ENCODE measurements at regions of chr2 and their contacts with region 1.

Region 1: DNA sequence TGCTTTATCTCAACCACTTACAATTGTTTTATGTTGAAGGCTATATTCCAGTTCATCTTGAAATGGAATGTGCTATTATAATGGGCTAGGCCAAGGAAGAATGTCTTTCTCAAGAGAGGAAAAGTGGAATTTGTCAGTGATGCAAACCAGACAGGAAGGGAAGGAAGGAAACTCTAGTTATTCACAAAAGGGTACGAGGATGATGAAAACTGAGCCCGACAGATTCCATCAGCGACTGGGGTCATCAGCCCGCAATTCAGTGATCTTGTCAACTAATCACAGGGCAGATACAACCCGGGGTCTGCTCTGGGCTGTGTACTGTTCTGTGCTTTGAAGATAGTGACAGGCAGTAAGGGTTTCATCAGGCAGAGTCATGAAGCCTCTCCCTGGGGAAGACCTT is 23.4 kb upstream of the LYPD6 start:
- DNase-seq: no peak
- H3K4me3 ChIP-seq: no peak overlapping the region
- H3K27ac ChIP-seq: no peak overlapping the region
- H3K4me1 ChIP-seq: no peaks in the 10 kb centered on the region
- H3K27me3 ChIP-seq: no peaks in the 10 kb centered on the region
- CTCF ChIP-seq: no peak
- EP300 ChIP-seq: no peak
- POLR2A ChIP-seq: no peak

Region 2: DNA sequence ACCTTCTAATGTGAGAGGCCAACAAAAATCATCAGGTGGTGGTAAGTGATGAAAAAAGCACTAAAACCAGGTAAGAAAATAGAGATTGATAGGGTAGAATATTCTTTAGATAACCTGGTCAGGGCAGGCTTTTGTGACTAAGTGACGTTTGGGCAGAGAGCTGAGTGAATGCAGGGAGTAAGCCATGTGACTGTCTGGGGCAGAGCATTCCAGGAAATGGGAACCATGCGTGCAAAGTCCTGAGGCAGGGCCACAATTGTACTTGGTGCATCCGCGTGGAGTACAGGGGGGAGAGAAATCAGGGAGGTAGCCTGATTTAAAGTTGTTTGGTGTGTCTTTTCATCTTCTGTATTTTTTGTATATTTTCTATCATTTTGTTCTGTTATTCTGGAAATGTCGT is 166.0 kb before region 1 on chr2:
- in situ Hi-C with region 1: no loop called
- intact Hi-C with region 1: no loop called
- DNase-seq: peak; percentile 16
- H3K4me3 ChIP-seq: no peak overlapping the region
- H3K27ac ChIP-seq: no peak overlapping the region
- H3K4me1 ChIP-seq: no peaks in the 10 kb centered on the region
- H3K27me3 ChIP-seq: no peaks in the 10 kb centered on the region
- CTCF ChIP-seq: no peak
- EP300 ChIP-seq: no peak
- POLR2A ChIP-seq: no peak

Region 3: DNA sequence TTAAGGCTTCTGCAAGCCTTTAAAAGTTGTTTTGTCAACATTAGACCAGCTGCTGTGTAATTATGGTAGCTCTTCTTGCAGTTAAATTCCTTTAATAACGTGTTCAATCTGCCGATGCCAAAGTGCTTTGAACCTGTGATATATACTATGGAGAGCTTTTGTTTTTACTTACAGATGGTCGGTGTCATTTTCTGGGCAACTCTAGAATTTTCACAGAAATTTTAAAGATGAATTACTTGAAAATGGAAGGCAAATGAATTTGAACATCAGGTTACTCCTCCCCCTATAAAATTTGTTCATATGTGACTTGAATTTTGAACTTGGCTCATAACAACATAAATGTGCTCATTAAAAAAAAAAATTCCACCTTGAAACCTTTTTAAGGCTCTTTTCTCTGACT is 46.4 kb after region 1 on chr2:
- in situ Hi-C with region 1: no loop called
- intact Hi-C with region 1: loop called (anchors 2 kb)
- DNase-seq: no peak
- H3K4me3 ChIP-seq: no peak overlapping the region
- H3K27ac ChIP-seq: no peak overlapping the region
- H3K4me1 ChIP-seq: peaks cover 0 to 11% (median 0%) of the 10 kb centered on the region in 4 donors
- H3K27me3 ChIP-seq: no peaks in the 10 kb centered on the region
- CTCF ChIP-seq: no peak
- EP300 ChIP-seq: no peak
- POLR2A ChIP-seq: no peak

Measured in transverse colon (tissue), 4 donors.